KBM-7 (cell line): ENCODE measurements at regions of chr11 and their contacts with region 1.

Region 1: GRCh38 chr11:34174412-34175041 is 69.1 kb downstream of the NAT10 start:
- DNase-seq: peak; percentile 78

Region 2: GRCh38 chr11:33808228-33808828 is 366.2 kb before region 1 on chr11:
- in situ Hi-C with region 1: loop called (anchors 25 kb)
- DNase-seq: peak; percentile 80

Region 3: GRCh38 chr11:34030387-34030786 is 144.1 kb before region 1 on chr11:
- in situ Hi-C with region 1: no loop called
- DNase-seq: no peak

Region 4: GRCh38 chr11:34051349-34052035 is 123.0 kb before region 1 on chr11 and contains the start of gene CAPRIN1:
- in situ Hi-C with region 1: no loop called
- DNase-seq: peak; percentile 95

Region 5: GRCh38 chr11:34105079-34105956 is 69.2 kb before region 1 on chr11 and contains the start of gene NAT10:
- in situ Hi-C with region 1: no loop called
- DNase-seq: peak; percentile 97

Region 6: GRCh38 chr11:34120651-34121050 is 53.9 kb before region 1 on chr11:
- in situ Hi-C with region 1: no loop called
- DNase-seq: no peak

Region 7: GRCh38 chr11:34357701-34358257 is 183.3 kb after region 1 on chr11 and contains the start of gene ABTB2:
- in situ Hi-C with region 1: loop called (anchors 25 kb)
- DNase-seq: peak; percentile 97

Region 8: GRCh38 chr11:34890812-34891211 is 716.3 kb after region 1 on chr11:
- in situ Hi-C with region 1: loop called (anchors 25 kb)
- DNase-seq: peak; percentile 49